ENCODE measurements at regions of chr18 and their contacts with region 1.

Region 1: GRCh38 chr18:36942264-36942663 is 113.3 kb downstream of the KIAA1328 start:
- DNase-seq: peak; percentile 60
- H3K4me3 Mint-ChIP-seq: no peak overlapping the region
- H3K27ac Mint-ChIP-seq: no peak overlapping the region
- H3K4me1 Mint-ChIP-seq: no peaks in the 10 kb centered on the region
- H3K27me3 Mint-ChIP-seq: no peaks in the 10 kb centered on the region

Region 2: GRCh38 chr18:37537868-37538525 is 595.7 kb after region 1 on chr18:
- intact Hi-C with region 1: loop called (anchors 10 kb)
- DNase-seq: peak; percentile 83
- H3K4me3 Mint-ChIP-seq: no peak overlapping the region
- H3K27ac Mint-ChIP-seq: no peak overlapping the region
- H3K4me1 Mint-ChIP-seq: no peaks in the 10 kb centered on the region
- H3K27me3 Mint-ChIP-seq: peaks cover 8% of the 10 kb centered on the region